ENCODE measurements at regions of chr16 and their contacts with region 1.

Region 1: DNA sequence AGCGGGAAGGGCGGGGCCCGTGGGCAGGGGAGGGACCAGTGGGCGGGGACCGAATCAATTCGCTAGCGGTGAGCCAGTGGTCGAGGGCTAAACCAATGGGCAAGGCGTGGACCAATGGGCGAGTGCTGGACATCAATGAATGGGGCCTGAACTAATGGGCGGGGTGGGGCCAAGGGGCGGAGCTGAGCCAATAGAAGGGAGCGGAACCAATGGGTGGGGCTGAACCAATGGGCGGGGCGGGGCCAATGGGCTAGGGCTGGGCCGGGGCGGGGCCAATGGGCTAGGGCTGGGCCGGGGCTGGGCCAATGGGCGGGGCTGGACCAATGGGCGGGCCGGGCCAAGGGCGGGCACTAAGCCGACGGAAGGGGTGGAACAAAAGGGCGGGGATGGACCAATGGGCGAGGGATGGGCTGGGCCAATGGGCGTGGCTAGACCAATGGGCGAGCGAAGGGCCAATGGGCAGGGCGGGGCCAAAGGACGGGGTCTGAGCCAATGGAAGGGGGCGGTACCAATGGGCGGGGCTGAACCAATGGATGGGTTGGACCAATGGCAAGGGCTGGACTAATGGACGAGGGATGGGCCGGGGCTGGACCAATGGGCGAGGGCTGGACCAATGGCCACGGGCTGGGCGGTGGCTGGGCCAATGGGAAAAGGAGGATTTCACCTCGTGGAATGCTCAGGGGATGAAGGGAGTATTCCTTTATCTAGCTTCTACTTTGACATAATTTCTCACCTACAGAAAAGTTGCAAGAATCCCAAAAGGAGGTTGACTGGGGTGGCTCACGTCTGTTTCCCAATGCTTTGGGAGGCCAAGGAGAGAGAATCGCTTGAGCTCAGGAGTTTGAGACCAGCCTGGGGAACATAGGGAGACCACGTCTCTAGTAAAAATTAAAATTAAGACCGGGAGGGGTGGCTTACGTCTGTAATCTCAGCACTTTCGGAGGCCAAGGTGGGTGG is 6.0 kb upstream of the FLYWCH1 start:
- DNase-seq: peak; percentile 73 to 96 (median 85)
- ATAC-seq: peak; percentile 83
- H3K4me3 ChIP-seq: peak overlapping the region; percentile 86 to 88
- H3K4me3 Mint-ChIP-seq: peak overlapping the region; percentile 91
- H3K27ac ChIP-seq: peak overlapping the region in 1 of 2 experiments; percentile 22
- H3K27ac Mint-ChIP-seq: peak overlapping the region; percentile 55
- H3K4me1 ChIP-seq: peaks cover 11% of the 10 kb centered on the region
- H3K4me1 Mint-ChIP-seq: peaks cover 23% of the 10 kb centered on the region
- H3K27me3 ChIP-seq: peaks cover 0 to 2% of the 10 kb centered on the region in 2 experiments
- H3K27me3 Mint-ChIP-seq: no peaks in the 10 kb centered on the region
- CTCF ChIP-seq: no peak

Region 2: GRCh38 chr16:2874912-2875362 is 30.8 kb before region 1 on chr16:
- CTCF ChIA-PET with region 1: interaction called, 9 read pairs
- POLR2A ChIA-PET with region 1: no interaction called
- intact Hi-C with region 1: loop called in 1 of 2 experiments (anchors 1 kb)
- DNase-seq: peak; percentile 37 to 86 (median 61)
- ATAC-seq: peak; percentile 100
- H3K4me3 ChIP-seq: no peak overlapping the region
- H3K4me3 Mint-ChIP-seq: no peak overlapping the region
- H3K27ac ChIP-seq: no peak overlapping the region
- H3K27ac Mint-ChIP-seq: no peak overlapping the region
- H3K4me1 ChIP-seq: no peaks in the 10 kb centered on the region
- H3K4me1 Mint-ChIP-seq: no peaks in the 10 kb centered on the region
- H3K27me3 ChIP-seq: no peaks in the 10 kb centered on the region
- H3K27me3 Mint-ChIP-seq: no peaks in the 10 kb centered on the region
- CTCF ChIP-seq: peak; percentile 98

Region 3: DNA sequence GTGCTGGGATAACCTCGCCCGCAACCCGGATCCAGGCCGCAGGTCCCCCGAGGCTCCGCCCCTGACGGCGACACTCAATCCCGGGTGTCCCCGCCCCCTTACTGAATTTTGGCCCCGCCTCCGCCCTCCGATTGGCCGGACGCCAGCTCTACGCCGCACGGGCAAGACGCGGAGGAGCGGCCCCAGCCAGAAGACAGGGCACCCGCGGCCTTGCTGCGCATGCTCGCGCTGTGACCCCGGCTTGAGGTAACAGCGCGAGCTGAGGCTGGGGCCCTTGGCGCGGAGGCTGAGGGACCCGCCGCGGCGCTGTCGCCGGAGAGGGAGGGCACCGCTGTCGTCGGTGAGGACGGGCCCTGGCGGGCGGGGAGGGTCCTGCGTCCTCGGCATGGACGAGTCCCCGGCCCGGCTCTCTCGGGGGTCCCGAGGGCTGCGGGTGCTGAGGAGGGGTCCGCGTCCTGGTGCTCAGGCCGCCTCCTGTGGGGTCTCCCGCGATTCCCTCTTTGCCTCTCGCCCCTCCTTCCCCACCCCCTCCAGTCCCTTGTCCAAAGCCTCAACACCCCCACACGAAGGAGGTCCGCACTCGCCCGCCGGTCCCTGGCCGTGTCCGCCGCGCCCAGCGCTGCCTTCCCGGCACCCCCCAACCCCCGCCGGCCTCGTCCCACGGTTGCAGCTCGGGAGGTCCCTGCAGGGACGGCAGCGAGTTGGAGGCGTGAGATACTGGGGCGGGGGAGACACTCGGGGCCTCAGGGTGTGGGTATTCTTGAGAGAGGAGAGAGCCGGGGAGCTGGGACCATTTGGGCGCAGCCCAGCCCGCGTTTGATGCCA is 22.5 kb before region 1 on chr16 and contains the start of gene FLYWCH2:
- CTCF ChIA-PET with region 1: interaction called, 9 read pairs
- POLR2A ChIA-PET with region 1: interaction called, 4 read pairs
- intact Hi-C with region 1: loop called (anchors 1 kb)
- DNase-seq: peak; percentile 98 to 100 (median 99)
- ATAC-seq: peak; percentile 83
- H3K4me3 ChIP-seq: peak within 1 kb of the TSS; percentile 69 to 78
- H3K4me3 Mint-ChIP-seq: peak within 1 kb of the TSS; percentile 87
- H3K27ac ChIP-seq: peak within 1 kb of the TSS; percentile 90 to 94
- H3K27ac Mint-ChIP-seq: peak within 1 kb of the TSS; percentile 95
- H3K4me1 ChIP-seq: peaks cover 9% of the 10 kb centered on the region
- H3K4me1 Mint-ChIP-seq: peaks cover 17% of the 10 kb centered on the region
- H3K27me3 ChIP-seq: no peaks in the 10 kb centered on the region
- H3K27me3 Mint-ChIP-seq: no peaks in the 10 kb centered on the region
- CTCF ChIP-seq: no peak
- total RNA-seq, gene FLYWCH2: 9.3 to 10.9 TPM